ENCODE measurements at regions of chr2 and their contacts with region 1.

Region 1: DNA sequence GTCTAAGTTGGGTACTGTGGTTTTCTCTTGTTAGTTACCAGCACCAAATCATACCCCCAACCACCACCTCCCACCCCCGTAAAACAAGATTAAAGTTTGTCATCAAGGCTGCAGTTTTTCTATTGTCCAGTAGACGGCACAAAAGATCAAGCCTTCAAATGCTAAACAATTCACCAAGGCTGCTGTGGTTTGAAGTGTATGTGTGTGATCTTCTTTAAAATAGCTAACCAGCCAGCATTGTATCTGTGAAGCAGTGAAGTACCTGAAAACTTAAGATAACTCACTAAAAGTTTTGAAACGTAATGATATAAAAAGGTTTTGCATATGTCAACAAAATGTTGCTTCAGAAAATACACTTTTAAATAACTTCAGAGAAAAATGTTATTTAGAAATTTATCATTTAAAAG is 5.9 kb upstream of the MEIS1 start:
- DNase-seq: no peak

Region 2: GRCh38 chr2:65576861-65577601 is 852.0 kb before region 1 on chr2:
- CTCF ChIA-PET with region 1: interaction called, 12 read pairs
- POLR2A ChIA-PET with region 1: no interaction called
- DNase-seq: no peak

Region 3: GRCh38 chr2:66445925-66446860 is 17.1 kb after region 1 on chr2:
- CTCF ChIA-PET with region 1: no interaction called
- POLR2A ChIA-PET with region 1: no interaction called
- DNase-seq: no peak

Region 4: DNA sequence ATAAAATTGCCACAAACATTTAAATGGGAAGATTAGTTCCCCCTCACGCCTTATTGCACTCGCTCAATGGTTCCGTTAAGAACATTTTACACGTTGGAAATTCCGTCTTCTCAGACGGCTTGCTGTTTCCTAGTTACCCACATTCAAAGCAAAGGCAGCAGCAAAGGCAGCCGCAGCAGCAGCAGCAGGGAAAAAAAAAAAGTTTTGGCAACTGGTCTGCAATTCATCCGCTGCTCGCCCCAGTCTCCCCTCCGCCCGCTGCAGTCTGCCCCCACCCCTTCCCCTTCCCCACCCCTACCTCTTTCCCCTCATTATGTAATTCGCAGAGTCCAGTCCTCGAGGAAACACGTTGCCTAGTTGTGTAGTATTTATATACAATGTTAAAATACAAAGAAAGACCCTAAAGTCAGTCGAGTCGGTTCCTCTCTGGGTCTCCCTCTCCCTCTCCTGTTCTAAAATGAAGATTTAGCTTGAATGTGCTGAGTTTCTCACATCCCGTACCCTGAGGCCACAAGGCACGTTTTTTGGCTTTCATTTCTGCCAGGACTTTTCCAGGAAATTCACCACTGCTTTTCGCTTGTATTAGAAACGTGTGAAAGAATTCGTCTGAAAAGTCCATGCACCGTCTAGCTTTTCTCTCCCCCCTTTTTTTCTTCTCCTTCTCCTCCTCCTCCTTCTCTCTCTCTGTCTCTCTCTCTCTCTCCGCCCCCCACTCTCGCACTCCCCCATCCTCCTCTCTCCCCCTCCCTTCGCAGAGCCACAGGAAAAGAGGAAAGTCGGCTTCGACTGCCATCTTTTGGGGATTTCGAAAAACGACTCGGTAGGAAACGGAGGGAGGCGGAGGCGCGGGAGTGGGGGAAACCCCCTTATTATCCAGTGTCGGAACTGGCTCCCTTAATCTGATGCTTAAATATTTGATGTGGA is 145.9 kb after region 1 on chr2:
- CTCF ChIA-PET with region 1: interaction called, 17 read pairs
- POLR2A ChIA-PET with region 1: interaction called, 64 read pairs
- DNase-seq: peak; percentile 65

Measured in HEK293T (cell line).